ENCODE measurements at regions of chrX and their contacts with region 1.

Region 1: DNA sequence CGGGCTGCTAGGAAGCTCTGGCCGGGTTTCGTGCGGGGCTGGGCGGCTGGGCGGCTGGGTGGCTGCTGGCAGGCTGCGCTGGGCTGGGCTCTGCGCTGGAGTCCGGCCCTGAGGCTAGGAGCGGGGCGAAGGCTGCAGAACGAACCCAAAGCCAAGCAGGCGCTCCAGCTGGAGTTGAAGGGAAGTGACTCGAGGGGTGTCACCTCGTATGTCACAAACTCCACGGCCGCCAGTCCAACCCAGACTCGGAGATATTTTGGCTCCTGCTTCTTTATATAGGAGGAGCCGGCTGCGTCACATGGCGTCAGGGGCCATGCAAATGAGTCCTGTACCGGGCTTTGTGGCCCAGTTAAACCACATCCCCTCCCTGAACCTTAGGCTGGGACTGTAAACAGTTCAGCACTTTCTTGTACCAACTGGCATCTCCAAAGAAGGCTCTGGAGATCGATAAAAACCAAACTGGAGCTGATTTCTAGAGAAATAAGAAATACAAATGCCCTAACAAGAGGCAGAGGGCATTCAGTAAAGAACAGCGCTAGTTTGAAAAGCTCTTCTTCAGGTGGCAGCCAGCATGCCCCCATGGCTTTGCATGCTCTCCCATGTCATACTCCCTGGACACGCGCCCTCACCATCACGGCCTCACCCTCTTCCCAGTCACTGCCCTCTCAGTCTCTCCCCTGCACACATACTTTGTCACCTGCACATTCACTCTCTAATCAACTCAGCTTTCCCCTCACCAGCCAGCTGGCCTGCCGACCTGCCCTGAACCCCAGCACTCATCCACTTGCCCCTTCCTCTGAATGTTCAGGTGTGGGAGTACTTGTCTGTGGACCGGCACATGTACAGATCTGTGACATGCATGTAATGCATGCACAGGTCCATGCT is 58.5 kb downstream of the TSC22D3 start:
- DNase-seq: peak; percentile 89
- H3K4me3 ChIP-seq: peak overlapping the region; percentile 54
- H3K27ac ChIP-seq: peak overlapping the region; percentile 71
- H3K4me1 ChIP-seq: no peaks in the 10 kb centered on the region
- H3K27me3 ChIP-seq: peaks cover 3% of the 10 kb centered on the region
- CTCF ChIP-seq: no peak

Region 2: DNA sequence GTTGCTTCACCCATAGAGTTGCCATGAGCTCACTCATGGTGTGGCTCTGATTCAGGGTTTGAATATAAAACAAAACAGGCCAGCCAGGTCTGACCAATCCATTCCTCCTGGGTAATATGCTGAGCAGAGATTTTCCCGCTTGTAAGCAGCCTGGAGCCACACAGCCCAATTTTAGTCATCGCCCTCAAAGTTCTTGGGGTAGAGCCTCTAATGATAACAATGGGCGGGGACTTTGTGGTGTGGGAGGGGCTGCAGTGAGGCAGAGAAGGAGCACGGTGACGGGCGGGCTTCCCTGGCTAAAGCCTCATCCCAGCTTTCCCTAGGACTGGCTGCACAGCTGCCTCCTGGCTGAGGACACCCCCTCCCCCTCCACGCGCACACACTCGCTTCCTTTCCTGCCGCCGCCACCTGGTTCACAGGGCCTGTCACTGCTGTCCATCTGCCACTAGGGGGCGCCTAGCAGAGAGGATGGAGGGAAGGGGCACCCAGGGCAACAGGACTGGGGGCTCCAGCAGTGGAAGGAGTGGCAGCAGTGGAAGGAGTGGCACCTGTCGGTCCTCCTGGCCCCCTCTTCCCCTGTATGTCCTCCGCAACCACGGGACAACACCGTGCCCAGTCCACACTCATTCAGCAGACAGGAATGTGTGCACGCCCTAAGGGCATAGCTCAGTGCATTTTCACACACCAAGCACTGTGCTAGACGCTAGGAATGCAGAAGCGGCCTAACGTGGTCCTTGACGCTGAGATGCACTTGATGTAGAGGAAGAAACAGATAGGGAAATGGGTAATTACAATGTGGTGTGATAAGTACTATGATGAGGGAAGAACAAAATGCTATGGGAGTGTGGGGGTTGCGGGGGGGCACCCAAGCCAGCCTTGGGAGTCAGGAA is 61.9 kb before region 1 on chrX:
- intact Hi-C with region 1: no loop called
- DNase-seq: peak; percentile 59
- H3K4me3 ChIP-seq: no peak overlapping the region
- H3K27ac ChIP-seq: no peak overlapping the region
- H3K4me1 ChIP-seq: no peaks in the 10 kb centered on the region
- H3K27me3 ChIP-seq: no peaks in the 10 kb centered on the region
- CTCF ChIP-seq: peak; percentile 53

Region 3: GRCh38 chrX:107676559-107677378 is 40.3 kb before region 1 on chrX:
- intact Hi-C with region 1: loop called (anchors 5 kb)
- DNase-seq: peak; percentile 75
- H3K4me3 ChIP-seq: peak overlapping the region; percentile 23
- H3K27ac ChIP-seq: peak overlapping the region; percentile 75
- H3K4me1 ChIP-seq: no peaks in the 10 kb centered on the region
- H3K27me3 ChIP-seq: no peaks in the 10 kb centered on the region
- CTCF ChIP-seq: no peak

Region 4: DNA sequence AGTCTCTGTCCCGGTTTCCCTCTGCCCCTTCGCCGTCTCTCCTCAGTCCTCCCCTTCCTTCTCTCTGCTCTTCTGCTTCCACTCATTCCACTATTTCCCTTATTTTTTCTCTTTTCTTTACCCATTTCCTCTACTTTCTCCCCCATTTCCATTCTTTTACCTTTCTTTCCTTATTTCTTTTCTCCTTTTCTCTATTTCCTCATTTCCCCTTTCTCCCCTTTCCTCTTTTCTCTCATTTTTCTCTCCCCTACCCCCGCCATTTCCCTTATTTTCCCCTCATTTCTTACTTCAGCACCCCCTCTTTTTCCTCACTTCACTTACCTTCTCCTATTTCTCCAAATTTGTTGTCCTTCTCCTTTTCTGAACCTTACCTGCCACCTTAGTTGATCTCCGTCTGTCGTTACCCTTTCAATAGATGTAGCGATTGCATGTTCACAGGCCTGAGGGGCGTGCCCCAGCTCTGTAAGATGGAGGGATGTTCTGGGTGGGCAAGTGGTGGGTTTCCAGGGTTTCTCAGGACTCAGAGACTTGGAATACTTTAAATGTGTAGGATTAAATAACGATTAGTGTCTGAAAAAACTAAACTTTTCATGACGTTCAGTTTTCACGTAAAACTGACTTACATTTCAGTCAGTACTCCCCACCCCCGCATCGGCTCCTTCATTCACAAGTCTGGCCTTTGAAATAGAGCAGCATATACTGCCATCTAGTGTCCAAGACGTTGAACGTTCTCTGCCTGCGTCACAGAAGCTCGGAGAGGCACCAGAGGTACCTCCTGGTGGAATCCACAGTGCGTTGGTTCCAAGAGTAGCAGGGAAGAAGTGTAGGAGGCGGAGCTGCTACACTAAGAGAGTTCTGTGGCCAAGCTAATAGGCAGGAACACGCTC is 59.8 kb after region 1 on chrX:
- intact Hi-C with region 1: loop called (anchors 5 kb)
- DNase-seq: peak; percentile 78
- H3K4me3 ChIP-seq: peak overlapping the region; percentile 41
- H3K27ac ChIP-seq: no peak overlapping the region
- H3K4me1 ChIP-seq: no peaks in the 10 kb centered on the region
- H3K27me3 ChIP-seq: peaks cover 4% of the 10 kb centered on the region
- CTCF ChIP-seq: peak; percentile 77

Measured in colonic mucosa (tissue), 4 donors.